Sigmoid colon (tissue), 7 donors: ENCODE measurements at regions of chr1 and their contacts with region 1.

Region 1: DNA sequence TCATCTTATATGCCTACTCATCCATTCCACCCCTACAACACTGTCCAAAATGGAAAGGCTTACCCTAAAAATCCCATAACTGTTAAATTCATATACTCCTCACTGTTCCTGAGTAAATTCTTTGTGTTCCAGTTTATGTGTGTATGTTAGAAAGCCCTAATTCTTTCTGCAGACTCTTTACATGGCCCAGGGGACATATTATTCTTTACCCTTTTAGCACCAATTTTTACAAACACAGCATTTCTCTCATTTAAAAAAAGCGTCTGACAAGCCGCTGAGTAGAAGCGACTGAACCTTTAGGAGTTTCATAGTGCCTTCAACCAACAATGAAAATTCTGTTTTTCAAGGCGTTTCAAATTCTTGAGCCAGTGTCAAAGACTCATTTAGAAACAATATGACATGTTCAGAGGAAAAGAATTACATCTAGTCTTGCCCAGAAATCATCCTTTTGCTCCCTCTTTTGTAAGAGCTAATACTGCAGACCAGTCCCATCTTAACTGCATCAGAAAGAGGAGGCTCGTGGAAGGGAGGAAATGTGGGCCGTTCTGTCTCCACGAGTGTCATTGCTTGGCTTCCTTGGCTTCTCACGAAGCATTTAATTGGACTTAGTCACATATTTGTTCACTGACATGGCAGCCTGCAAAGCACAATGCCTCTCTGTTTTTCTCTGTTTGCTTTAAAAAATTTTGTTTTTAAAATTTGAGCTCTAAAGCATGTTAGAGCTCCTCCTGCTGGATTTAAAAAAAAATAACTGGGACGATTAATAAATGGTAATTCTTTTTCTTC is 21.3 kb upstream of the C1orf105 start:
- DNase-seq: peak; percentile 90
- H3K4me3 ChIP-seq: peak overlapping the region in 1 of 4 donors; percentile 23
- H3K27ac ChIP-seq: peak overlapping the region; percentile 68 to 82 (median 78)
- H3K4me1 ChIP-seq: peaks cover 0 to 60% (median 55%) of the 10 kb centered on the region in 4 donors
- H3K27me3 ChIP-seq: no peaks in the 10 kb centered on the region
- CTCF ChIP-seq: peak; percentile 64 to 72 (median 68)
- EP300 ChIP-seq: no peak
- POLR2A ChIP-seq: no peak

Region 2: GRCh38 chr1:172041742-172042141 is 357.4 kb before region 1 on chr1:
- intact Hi-C with region 1: loop called (anchors 2 kb)
- DNase-seq: no peak
- H3K4me3 ChIP-seq: no peak overlapping the region
- H3K27ac ChIP-seq: no peak overlapping the region
- H3K4me1 ChIP-seq: no peaks in the 10 kb centered on the region
- H3K27me3 ChIP-seq: no peaks in the 10 kb centered on the region
- CTCF ChIP-seq: peak in 3 of 4 experiments; percentile 36 to 46 (median 39)
- EP300 ChIP-seq: no peak
- POLR2A ChIP-seq: no peak

Region 3: DNA sequence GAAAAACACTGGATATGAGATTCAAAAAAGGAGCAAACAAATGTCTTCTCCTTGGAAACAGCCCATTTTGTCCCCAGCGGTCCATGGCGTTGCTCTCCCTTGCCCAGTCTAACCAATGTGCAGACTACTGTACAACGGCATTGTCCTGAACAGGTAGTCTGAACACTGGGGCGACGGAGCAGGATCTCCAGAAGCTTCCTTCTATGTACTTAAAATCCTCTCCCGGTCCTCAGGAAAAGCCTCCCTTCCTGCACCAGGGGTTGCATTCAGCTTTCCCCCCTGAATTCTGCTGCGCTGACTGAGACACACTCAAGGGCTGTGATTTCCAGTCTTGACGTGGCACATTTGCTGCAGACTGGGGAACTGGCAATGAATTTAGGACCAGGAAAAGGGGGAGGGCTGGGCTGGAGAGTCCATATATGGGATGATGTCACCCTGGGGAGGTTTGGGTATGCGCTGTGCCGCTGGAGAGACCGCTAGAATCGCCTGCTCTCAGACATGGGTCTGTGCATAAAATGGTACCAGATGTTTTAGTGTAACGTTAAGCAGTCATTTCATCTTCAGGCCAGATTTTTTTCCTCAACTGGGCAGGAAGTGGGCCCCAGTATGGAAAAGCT is 254.6 kb before region 1 on chr1:
- intact Hi-C with region 1: loop called (anchors 2 kb)
- DNase-seq: peak; percentile 96
- H3K4me3 ChIP-seq: peak overlapping the region; percentile 45 to 62 (median 58)
- H3K27ac ChIP-seq: peak overlapping the region; percentile 80 to 92 (median 88)
- H3K4me1 ChIP-seq: peaks cover 0 to 33% (median 11%) of the 10 kb centered on the region in 4 donors
- H3K27me3 ChIP-seq: no peaks in the 10 kb centered on the region
- CTCF ChIP-seq: no peak
- EP300 ChIP-seq: peak in 2 of 4 donors; percentile 7 to 66
- POLR2A ChIP-seq: peak; percentile 67 to 73

Region 4: GRCh38 chr1:172269644-172270043 is 129.5 kb before region 1 on chr1:
- intact Hi-C with region 1: loop called (anchors 5 kb)
- DNase-seq: no peak
- H3K4me3 ChIP-seq: no peak overlapping the region
- H3K27ac ChIP-seq: peak overlapping the region in 3 of 4 donors; percentile 33 to 53 (median 44)
- H3K4me1 ChIP-seq: peaks cover 0 to 21% (median 16%) of the 10 kb centered on the region in 4 donors
- H3K27me3 ChIP-seq: no peaks in the 10 kb centered on the region
- CTCF ChIP-seq: no peak
- EP300 ChIP-seq: no peak
- POLR2A ChIP-seq: no peak

Region 5: GRCh38 chr1:172322219-172323061 is 76.7 kb before region 1 on chr1:
- intact Hi-C with region 1: loop called (anchors 5 kb)
- DNase-seq: peak; percentile 73
- H3K4me3 ChIP-seq: peak overlapping the region in 2 of 4 donors; percentile 3 to 24
- H3K27ac ChIP-seq: peak overlapping the region; percentile 72 to 82 (median 77)
- H3K4me1 ChIP-seq: peaks cover 0 to 51% (median 37%) of the 10 kb centered on the region in 4 donors
- H3K27me3 ChIP-seq: no peaks in the 10 kb centered on the region
- CTCF ChIP-seq: no peak
- EP300 ChIP-seq: no peak
- POLR2A ChIP-seq: no peak

Region 6: GRCh38 chr1:172443626-172444453 is 44.7 kb after region 1 on chr1 and contains the start of gene PIGC:
- intact Hi-C with region 1: loop called (anchors 1 kb)
- DNase-seq: peak; percentile 95
- H3K4me3 ChIP-seq: peak within 1 kb of the TSS; percentile 54 to 99 (median 77)
- H3K27ac ChIP-seq: peak within 1 kb of the TSS; percentile 68 to 85 (median 74)
- H3K4me1 ChIP-seq: peaks cover 0 to 26% (median 17%) of the 10 kb centered on the region in 4 donors
- H3K27me3 ChIP-seq: no peaks in the 10 kb centered on the region
- CTCF ChIP-seq: peak; percentile 62 to 87 (median 81)
- EP300 ChIP-seq: no peak
- POLR2A ChIP-seq: no peak
- total RNA-seq, gene PIGC: 20.8 to 37.4 (median 29.7) TPM

Region 7: DNA sequence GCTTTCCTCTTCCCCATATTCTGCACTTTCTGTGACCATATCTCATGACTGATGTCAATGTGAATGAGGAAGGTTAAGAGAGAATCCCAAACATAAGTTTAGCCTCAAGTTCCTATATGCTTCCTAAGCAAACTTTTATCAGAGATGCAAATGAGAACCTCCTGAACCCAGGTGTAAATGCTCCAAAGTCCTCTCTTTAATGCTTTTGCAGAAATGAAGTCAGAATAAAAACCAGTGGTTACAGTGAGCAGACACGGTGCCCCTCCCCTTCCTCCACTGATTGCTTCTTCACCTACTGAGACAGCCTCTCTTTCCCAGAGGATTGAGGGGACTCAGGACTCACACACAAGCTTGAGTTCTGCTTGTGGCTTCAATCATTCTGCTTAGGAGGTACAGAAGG is 56.3 kb after region 1 on chr1:
- intact Hi-C with region 1: no loop called
- DNase-seq: no peak
- H3K4me3 ChIP-seq: no peak overlapping the region
- H3K27ac ChIP-seq: no peak overlapping the region
- H3K4me1 ChIP-seq: peaks cover 0 to 1% (median under 1%) of the 10 kb centered on the region in 4 donors
- H3K27me3 ChIP-seq: no peaks in the 10 kb centered on the region
- CTCF ChIP-seq: no peak
- EP300 ChIP-seq: no peak
- POLR2A ChIP-seq: no peak